ENCODE measurements at regions of chr9 and their contacts with region 1.

Region 1: GRCh38 chr9:127161081-127161624 is 38.7 kb upstream of the ANGPTL2 start:
- DNase-seq: no peak
- H3K4me3 ChIP-seq: no peak overlapping the region
- H3K27ac ChIP-seq: no peak overlapping the region
- H3K27me3 ChIP-seq: no peaks in the 10 kb centered on the region
- CTCF ChIP-seq: no peak

Region 2: GRCh38 chr9:126682113-126682810 is 478.9 kb before region 1 on chr9:
- CTCF ChIA-PET with region 1: no interaction called
- POLR2A ChIA-PET with region 1: interaction called, 11 read pairs
- DNase-seq: no peak
- H3K4me3 ChIP-seq: no peak overlapping the region
- H3K27ac ChIP-seq: no peak overlapping the region
- H3K27me3 ChIP-seq: peaks cover 71% of the 10 kb centered on the region
- CTCF ChIP-seq: no peak